Mammary epithelial cell (primary cell): ENCODE measurements at regions of chr2 and their contacts with region 1.

Region 1: DNA sequence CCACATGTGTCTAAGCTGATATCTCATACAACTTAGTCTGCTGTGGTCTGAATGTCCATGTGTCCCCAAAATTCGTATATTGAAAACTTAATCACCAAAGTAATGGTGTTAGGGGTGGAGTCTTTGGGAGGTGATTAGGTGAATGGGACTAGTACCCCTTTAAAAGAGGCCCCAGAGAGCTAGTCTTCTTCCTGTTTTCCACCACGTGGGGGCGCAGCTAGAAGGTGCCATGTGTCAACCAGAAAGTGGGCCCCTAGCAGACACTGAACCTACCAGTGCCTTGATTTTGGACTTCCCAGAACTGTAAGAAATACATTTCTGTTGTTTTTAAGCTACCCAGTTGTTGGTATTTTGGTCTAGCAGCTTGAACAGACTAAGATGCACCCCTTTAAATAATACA is 86.6 kb downstream of the ASB1 start:
- DNase-seq: peak; percentile 44
- H3K4me3 ChIP-seq: no peak overlapping the region
- H3K27ac ChIP-seq: no peak overlapping the region
- H3K4me1 ChIP-seq: peaks cover 5% of the 10 kb centered on the region
- H3K27me3 ChIP-seq: no peaks in the 10 kb centered on the region
- CTCF ChIP-seq: peak; percentile 62 to 78

Region 2: DNA sequence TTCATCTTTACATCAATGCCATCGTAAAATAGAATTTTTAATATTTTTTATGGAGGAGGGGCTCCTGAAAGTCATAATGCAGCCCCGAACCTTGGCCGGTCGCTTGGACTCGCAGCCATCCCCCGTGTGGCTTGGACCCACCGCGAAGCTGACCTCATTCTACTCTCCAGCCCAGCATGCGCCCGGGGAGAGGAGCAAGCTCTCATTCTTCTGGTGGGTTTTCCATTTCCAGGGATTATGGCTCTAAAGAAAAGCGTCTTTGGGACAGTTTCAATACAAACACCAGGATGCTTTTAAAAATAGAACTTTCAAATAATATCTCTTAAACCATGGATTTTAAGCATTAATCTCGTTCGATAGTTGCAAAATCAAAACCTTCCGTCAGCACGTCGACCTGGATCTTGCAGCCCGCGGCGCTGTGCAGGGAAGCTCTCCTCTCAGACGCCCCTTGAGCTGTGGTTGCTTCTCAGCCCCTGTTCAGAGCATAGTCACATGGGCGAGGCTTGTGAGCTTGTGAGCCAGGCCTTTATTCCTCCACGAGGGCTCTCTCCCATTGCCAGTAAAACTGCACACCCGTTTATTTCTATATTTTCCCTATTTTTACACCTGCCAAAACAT is 103.7 kb before region 1 on chr2:
- CTCF ChIA-PET with region 1: no interaction called
- dilution Hi-C with region 1: loop called (anchors 5 kb)
- in situ Hi-C with region 1: no loop called
- intact Hi-C with region 1: no loop called
- DNase-seq: no peak
- H3K4me3 ChIP-seq: no peak overlapping the region
- H3K27ac ChIP-seq: no peak overlapping the region
- H3K4me1 ChIP-seq: no peaks in the 10 kb centered on the region
- H3K27me3 ChIP-seq: no peaks in the 10 kb centered on the region
- CTCF ChIP-seq: no peak

Region 3: DNA sequence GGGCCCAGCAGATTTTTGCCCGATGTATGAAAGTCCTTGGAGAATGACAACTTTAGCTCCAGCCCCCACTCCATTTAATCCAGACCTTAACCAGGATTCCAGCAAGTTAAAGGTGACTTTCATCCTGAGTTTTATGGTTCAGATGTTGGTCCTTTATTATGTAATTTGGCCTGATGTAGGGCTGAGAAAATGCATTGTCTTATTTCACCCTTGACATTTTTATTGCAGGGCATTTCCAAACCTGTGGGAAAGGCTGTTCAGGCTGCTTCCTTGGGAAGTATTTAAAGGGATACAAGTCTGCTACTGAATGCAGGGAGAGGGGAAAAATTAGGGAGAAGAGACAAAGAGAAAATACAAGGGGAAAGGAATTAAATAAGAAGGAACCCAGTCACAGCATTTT is 37.8 kb before region 1 on chr2:
- CTCF ChIA-PET with region 1: no interaction called
- dilution Hi-C with region 1: no loop called
- in situ Hi-C with region 1: no loop called
- intact Hi-C with region 1: no loop called
- DNase-seq: no peak
- H3K4me3 ChIP-seq: no peak overlapping the region
- H3K27ac ChIP-seq: no peak overlapping the region
- H3K4me1 ChIP-seq: peaks cover 14% of the 10 kb centered on the region
- H3K27me3 ChIP-seq: no peaks in the 10 kb centered on the region
- CTCF ChIP-seq: no peak

Region 4: DNA sequence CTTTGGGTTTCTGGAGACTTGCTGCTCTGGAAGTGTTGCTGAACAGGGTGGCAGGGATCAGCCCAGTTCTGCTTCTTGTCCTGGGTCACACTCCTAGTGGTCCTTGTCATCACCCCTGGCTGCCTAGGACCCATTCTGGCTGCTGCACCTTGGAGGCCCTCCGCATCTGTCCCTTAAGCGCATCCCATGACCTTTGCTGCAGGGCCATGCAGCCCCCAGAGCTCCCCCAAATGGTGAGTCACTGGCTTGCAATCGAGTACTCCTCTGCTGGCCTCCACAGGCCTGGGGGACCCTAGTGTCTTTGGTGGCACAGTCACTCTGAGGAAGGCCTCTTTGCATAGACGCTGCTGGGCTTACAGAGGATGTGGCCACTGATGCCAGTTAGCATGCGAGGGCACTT is 101.8 kb after region 1 on chr2:
- CTCF ChIA-PET with region 1: interaction called, 9 read pairs
- dilution Hi-C with region 1: no loop called
- in situ Hi-C with region 1: no loop called
- intact Hi-C with region 1: loop called (anchors 1 kb)
- DNase-seq: no peak
- H3K4me3 ChIP-seq: no peak overlapping the region
- H3K27ac ChIP-seq: no peak overlapping the region
- H3K4me1 ChIP-seq: no peaks in the 10 kb centered on the region
- H3K27me3 ChIP-seq: no peaks in the 10 kb centered on the region
- CTCF ChIP-seq: no peak

Region 5: DNA sequence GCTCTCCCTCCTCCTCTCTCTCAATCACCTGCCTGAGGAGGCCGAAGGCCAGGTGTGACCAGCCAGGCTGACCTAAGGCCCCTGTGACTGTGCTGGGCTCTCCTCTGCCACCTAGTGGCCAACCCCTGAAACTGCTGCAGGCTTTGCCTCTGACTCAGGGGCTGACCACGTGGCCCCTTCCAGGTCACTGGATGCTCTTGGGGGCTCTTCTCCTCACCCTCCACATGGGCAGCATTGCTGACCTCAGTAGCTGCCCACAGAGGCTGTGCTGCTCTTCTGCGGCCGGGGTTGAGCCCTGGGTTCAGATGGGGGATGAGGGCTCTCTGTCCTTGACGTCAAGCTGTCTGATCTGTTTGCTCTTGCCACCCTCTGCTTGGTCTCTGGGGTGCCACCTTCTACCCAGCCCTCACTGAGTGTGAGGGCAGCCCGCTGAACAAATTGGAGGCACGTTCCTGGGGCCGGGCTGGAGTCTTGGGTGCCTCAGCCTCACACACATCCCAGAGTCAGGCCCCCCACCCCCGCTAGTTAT is 457.3 kb after region 1 on chr2:
- CTCF ChIA-PET with region 1: no interaction called
- dilution Hi-C with region 1: no loop called
- in situ Hi-C with region 1: no loop called
- intact Hi-C with region 1: loop called (anchors 1 kb)
- DNase-seq: peak; percentile 36
- H3K4me3 ChIP-seq: no peak overlapping the region
- H3K27ac ChIP-seq: no peak overlapping the region
- H3K4me1 ChIP-seq: peaks cover 21% of the 10 kb centered on the region
- H3K27me3 ChIP-seq: no peaks in the 10 kb centered on the region
- CTCF ChIP-seq: peak; percentile 100

Region 6: DNA sequence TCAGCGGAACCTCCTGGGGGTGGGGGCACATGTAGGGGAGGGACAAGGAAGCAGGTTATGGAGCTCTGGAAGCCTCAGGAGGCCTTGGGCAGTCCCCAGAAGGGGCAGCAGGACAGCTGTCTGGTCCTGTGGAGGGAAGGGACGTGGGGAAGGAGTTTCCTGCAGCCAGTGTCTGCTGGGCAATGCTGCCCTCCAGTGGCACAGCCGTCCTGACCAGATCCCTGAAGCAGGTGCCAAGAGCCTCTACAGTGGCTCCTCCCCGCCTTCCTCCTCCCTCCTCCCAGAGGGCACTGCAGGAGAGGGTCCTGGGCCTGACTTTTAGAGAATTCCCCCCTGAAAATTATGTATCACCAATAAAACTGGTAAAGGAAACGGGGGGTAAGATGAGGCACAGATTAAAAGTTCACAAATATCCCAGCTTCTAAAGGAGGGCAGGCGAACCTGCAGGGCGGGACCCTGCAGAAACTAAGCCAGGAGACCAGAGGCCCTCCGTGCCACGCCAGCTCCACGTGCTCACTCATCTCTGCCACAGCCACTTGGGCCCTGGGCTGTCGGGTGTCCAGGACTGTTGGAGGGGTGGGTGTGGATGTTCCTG is 593.1 kb after region 1 on chr2:
- CTCF ChIA-PET with region 1: no interaction called
- dilution Hi-C with region 1: no loop called
- in situ Hi-C with region 1: no loop called
- intact Hi-C with region 1: loop called (anchors 1 kb)
- DNase-seq: peak; percentile 43
- H3K4me3 ChIP-seq: no peak overlapping the region
- H3K27ac ChIP-seq: no peak overlapping the region
- H3K4me1 ChIP-seq: peaks cover 9% of the 10 kb centered on the region
- H3K27me3 ChIP-seq: no peaks in the 10 kb centered on the region
- CTCF ChIP-seq: peak; percentile 45 to 77